Activated T-helper 1 cell treated with anti-CD3 and anti-CD28 coated beads, Interleukin-12 subunit alpha, Interleukin-12 subunit beta, Interleukin-2, Interleukin-4 antibody, amounts not matched to agents 30 ng/mL and 10 ng/mL and 1 ng/mL, durations not matched to agents 14 hours and 24 hours and 36 hours (primary cell): ENCODE measurements at regions of chr7 and their contacts with region 1.

Region 1: DNA sequence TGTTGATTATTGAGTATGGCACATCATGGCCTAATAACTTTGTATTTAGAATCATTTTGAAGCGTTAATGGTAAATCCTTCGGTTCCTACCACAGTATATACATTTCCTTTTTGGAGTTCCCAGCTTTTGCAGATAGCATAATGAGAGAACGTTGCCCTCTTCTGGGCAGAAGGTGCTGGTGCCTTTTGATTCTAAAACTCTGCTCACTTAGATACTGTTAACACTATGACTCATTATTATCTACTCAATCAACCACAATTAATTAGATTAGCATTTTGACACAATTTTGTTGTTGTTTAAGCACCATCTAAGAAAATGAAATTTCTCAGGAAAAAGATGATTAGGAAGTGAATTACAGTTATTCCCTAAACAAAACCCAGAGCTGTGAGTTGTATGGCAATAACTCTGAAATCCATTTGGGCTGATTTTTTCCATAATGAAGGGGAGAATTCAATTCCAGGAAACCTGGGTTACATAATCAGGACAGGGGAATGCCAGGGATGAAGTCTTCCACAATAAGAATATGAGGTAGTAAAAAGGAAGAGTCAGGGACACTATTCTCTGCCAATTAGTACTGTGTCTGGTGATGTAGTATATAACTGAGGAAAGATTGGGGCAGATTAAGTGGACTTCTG is 11.5 kb upstream of the DLD start:
- DNase-seq: no peak
- H3K4me3 Mint-ChIP-seq: no peak overlapping the region
- H3K27ac Mint-ChIP-seq: no peak overlapping the region
- H3K4me1 Mint-ChIP-seq: peaks cover 10% of the 10 kb centered on the region
- H3K27me3 Mint-ChIP-seq: peaks cover 8% of the 10 kb centered on the region

Region 2: GRCh38 chr7:107150375-107151073 is 729.0 kb before region 1 on chr7:
- intact Hi-C with region 1: loop called (anchors 5 kb)
- DNase-seq: peak; percentile 57
- H3K4me3 Mint-ChIP-seq: no peak overlapping the region
- H3K27ac Mint-ChIP-seq: no peak overlapping the region
- H3K4me1 Mint-ChIP-seq: no peaks in the 10 kb centered on the region
- H3K27me3 Mint-ChIP-seq: peaks cover 5% of the 10 kb centered on the region

Region 3: GRCh38 chr7:107462740-107463444 is 416.6 kb before region 1 on chr7:
- intact Hi-C with region 1: loop called (anchors 1 kb)
- DNase-seq: peak; percentile 7
- H3K4me3 Mint-ChIP-seq: no peak overlapping the region
- H3K27ac Mint-ChIP-seq: no peak overlapping the region
- H3K4me1 Mint-ChIP-seq: no peaks in the 10 kb centered on the region
- H3K27me3 Mint-ChIP-seq: no peaks in the 10 kb centered on the region

Region 4: GRCh38 chr7:107661081-107661864 is 218.2 kb before region 1 on chr7:
- intact Hi-C with region 1: loop called (anchors 5 kb)
- DNase-seq: peak; percentile 55
- H3K4me3 Mint-ChIP-seq: peak overlapping the region; percentile 96
- H3K27ac Mint-ChIP-seq: peak overlapping the region; percentile 92
- H3K4me1 Mint-ChIP-seq: peaks cover 40% of the 10 kb centered on the region
- H3K27me3 Mint-ChIP-seq: peaks cover 3% of the 10 kb centered on the region

Region 5: DNA sequence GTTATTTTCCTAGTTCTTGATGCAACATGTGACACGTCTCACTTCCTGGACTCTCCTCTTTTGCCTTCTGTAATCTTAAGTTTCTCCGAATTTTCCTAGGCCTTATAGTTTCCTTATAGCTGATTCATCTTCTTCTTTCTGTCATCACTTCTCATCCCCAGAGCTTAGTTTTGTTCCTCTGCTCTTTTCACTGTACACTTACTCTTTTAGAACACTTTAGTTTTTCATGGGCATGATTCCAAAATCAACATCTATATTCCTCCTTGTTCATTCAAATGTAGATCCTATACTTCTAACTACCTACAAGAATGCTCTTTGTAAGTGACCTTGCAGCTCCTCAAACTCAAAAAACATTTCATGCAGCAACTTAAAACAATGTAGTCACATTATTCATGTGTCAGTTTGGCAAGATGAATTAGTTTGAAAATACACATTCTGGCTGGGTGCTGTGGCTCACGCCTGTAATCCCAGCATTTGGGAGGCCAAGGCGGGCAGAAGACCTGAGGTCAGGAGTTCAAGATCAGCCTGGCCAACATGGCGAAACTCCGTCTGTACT is 63.4 kb before region 1 on chr7:
- intact Hi-C with region 1: loop called (anchors 2 kb)
- DNase-seq: no peak
- H3K4me3 Mint-ChIP-seq: peak overlapping the region; percentile 19
- H3K27ac Mint-ChIP-seq: peak overlapping the region; percentile 72
- H3K4me1 Mint-ChIP-seq: peaks cover 25% of the 10 kb centered on the region
- H3K27me3 Mint-ChIP-seq: no peaks in the 10 kb centered on the region

Region 6: DNA sequence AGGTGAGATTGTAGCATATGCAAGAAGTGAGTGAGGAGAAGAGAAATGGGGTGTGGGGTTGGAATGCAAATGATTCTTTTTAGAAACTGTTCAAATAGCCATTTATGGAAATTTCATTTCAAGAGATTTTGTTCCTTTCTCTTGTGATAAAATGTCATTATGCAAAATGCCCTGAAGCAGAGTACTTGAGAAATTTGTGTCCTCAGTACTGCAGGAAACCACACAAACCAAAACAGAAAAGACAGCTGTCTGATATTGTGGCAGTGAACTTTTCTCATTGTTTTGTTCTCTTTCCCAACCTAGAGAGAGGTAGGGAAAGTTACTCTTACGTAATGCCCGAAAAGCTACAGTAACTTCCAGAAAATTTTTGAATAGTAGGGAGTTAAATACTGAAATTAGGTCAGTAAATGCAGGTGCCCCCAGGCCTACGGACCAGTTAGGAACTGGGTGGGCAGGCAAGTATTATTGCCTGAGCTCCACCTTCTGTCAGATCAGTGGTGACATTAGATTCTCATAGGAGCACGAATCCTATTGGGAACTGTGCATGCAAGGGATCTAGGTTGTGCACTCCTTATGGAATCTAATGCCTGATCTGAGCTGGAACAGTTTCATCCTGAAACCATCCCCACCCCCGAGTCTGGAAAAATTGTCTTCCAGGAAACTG is 45.5 kb after region 1 on chr7:
- intact Hi-C with region 1: no loop called
- DNase-seq: no peak
- H3K4me3 Mint-ChIP-seq: no peak overlapping the region
- H3K27ac Mint-ChIP-seq: no peak overlapping the region
- H3K4me1 Mint-ChIP-seq: peaks cover 34% of the 10 kb centered on the region
- H3K27me3 Mint-ChIP-seq: no peaks in the 10 kb centered on the region

Region 7: GRCh38 chr7:108146070-108146837 is 266.7 kb after region 1 on chr7:
- intact Hi-C with region 1: loop called (anchors 1 kb)
- DNase-seq: peak; percentile 32
- H3K4me3 Mint-ChIP-seq: no peak overlapping the region
- H3K27ac Mint-ChIP-seq: no peak overlapping the region
- H3K4me1 Mint-ChIP-seq: no peaks in the 10 kb centered on the region
- H3K27me3 Mint-ChIP-seq: peaks cover 9% of the 10 kb centered on the region